Activated naive CD4-positive, alpha-beta T cell treated with anti-CD3 and anti-CD28 coated beads for 36 hours (primary cell): ENCODE measurements at regions of chr13 and their contacts with region 1.

Region 1: DNA sequence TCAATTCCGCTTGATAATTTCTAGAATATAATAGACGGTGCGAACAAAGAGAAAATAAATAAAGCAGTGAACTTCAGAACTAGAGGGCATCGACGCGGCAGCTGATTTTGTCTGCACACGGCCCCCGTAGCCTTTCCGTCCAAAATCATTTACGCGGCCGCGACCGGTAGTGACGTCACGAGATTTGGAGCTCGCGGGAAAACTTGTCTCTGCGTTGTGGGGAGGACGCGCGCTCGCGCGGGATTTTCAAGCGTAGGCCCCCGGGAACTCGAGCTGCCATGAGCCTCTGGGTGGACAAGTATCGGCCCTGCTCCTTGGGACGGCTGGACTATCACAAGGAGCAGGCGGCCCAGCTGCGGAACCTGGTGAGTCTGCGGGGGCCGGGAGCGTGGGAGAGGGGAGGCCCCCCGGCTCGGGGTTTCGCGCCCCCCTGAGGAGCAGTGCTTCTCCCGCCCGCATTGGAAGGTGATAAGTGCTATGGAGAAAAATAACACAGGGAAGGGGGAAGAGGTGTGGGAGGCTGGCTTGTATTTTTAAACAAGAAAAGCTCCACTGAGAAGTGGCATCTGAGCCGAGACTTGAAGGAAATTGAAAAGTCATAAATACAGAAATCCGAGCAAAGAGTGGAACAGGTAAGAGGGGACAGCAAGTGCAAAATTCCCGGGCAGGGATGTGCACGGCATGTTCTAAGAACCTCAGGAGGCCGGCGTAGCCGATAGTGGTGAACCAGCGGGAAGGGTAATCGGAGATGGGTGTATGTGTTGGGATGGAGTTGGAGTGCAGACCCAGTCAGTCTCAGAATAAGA is at the start of gene RFC3:
- DNase-seq: peak; percentile 96
- H3K4me3 Mint-ChIP-seq: peak within 1 kb of the TSS; percentile 94
- H3K27ac Mint-ChIP-seq: peak within 1 kb of the TSS; percentile 90
- H3K4me1 Mint-ChIP-seq: peaks cover 27% of the 10 kb centered on the region
- H3K27me3 Mint-ChIP-seq: no peaks in the 10 kb centered on the region
- total RNA-seq, gene RFC3: 51.6 TPM

Region 2: DNA sequence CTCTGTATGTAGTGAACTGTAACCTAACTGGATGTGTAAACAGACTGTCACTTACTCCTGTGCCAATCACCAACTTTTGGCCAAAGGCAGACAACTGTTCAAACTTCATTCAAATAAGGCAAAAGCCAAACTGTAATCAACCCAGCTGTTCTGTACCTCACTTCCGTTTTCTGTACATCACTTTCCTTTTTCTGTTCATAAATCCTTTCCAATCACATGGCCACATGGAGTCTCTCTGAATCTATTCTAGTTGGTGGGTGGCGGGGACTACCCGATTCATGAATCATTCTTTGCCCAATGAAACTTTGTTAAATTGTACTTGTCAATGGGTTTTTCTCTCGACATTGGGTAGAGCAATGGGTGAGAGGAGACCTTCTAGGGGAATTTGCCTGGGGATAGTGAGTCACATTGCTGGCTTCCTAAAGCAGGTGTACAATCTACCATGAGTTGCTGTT is 178.5 kb before region 1 on chr13:
- CTCF ChIA-PET with region 1: no interaction called
- intact Hi-C with region 1: loop called (anchors 1 kb)
- DNase-seq: peak; percentile 81
- H3K4me3 Mint-ChIP-seq: no peak overlapping the region
- H3K27ac Mint-ChIP-seq: peak overlapping the region; percentile 80
- H3K4me1 Mint-ChIP-seq: peaks cover 41% of the 10 kb centered on the region
- H3K27me3 Mint-ChIP-seq: no peaks in the 10 kb centered on the region

Region 3: GRCh38 chr13:33678906-33679657 is 139.0 kb before region 1 on chr13:
- CTCF ChIA-PET with region 1: no interaction called
- intact Hi-C with region 1: loop called (anchors 1 kb)
- DNase-seq: peak; percentile 90
- H3K4me3 Mint-ChIP-seq: peak overlapping the region; percentile 49
- H3K27ac Mint-ChIP-seq: peak overlapping the region; percentile 93
- H3K4me1 Mint-ChIP-seq: peaks cover 30% of the 10 kb centered on the region
- H3K27me3 Mint-ChIP-seq: peaks cover 3% of the 10 kb centered on the region

Region 4: GRCh38 chr13:33787051-33787591 is 31.0 kb before region 1 on chr13:
- CTCF ChIA-PET with region 1: no interaction called
- intact Hi-C with region 1: loop called (anchors 1 kb)
- DNase-seq: no peak
- H3K4me3 Mint-ChIP-seq: peak overlapping the region; percentile 57
- H3K27ac Mint-ChIP-seq: no peak overlapping the region
- H3K4me1 Mint-ChIP-seq: peaks cover 11% of the 10 kb centered on the region
- H3K27me3 Mint-ChIP-seq: no peaks in the 10 kb centered on the region

Region 5: GRCh38 chr13:34941835-34942731 is 1124.0 kb after region 1 on chr13 and contains the start of gene NBEA:
- CTCF ChIA-PET with region 1: no interaction called
- intact Hi-C with region 1: loop called (anchors 1 kb)
- DNase-seq: peak; percentile 70
- H3K4me3 Mint-ChIP-seq: peak within 1 kb of the TSS; percentile 84
- H3K27ac Mint-ChIP-seq: no peak within 1 kb of the TSS
- H3K4me1 Mint-ChIP-seq: peaks cover 21% of the 10 kb centered on the region
- H3K27me3 Mint-ChIP-seq: peaks cover 40% of the 10 kb centered on the region
- total RNA-seq, gene NBEA: 0.26 to 0.67 TPM

Region 6: GRCh38 chr13:35164324-35164932 is 1346.3 kb after region 1 on chr13:
- CTCF ChIA-PET with region 1: no interaction called
- intact Hi-C with region 1: loop called (anchors 5 kb)
- DNase-seq: no peak
- H3K4me3 Mint-ChIP-seq: no peak overlapping the region
- H3K27ac Mint-ChIP-seq: no peak overlapping the region
- H3K4me1 Mint-ChIP-seq: peaks cover 6% of the 10 kb centered on the region
- H3K27me3 Mint-ChIP-seq: no peaks in the 10 kb centered on the region